B cell (primary cell): ENCODE measurements at regions of chr1 and their contacts with region 1.

Region 1: DNA sequence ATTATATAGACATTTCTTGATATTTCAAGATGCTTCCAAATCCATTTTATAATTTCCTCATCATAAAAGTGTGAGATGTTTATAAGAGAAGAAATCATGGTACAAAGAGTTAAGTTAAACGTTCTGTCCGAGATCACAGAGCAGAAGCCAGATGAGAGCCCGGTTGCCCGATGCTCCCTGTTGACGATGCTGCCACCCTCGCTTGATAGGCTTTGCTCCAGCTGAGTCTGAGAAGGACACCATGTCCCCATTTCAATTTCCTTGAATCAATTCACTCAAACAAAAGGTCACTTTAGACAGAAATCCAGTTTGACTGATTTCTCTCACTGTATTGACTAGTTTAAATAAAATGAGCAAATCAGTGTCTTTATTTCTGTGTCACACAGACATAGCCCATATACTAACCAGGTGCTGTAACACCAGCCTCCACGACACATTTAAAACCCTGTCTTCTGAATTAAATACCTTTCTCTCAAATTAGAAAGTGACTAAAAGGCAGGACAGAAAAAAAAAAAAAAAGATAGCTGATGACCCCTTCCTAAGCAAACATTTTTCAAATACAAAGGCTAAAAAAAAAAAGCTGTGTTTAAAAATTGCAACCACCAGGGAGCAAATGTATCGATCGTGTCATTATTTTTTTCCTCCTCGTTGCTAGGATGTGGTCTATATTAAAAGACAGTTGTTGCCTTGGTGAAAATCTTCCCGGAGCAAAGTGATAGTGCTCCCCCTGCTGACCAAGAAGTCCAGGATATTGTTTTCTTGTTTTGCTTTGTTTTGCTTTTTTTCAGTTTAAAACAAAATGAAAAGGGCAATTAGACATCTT is 35.2 kb downstream of the DNASE2B start:
- DNase-seq: peak; percentile 78
- ATAC-seq: peak; percentile 34
- H3K4me3 ChIP-seq: peak overlapping the region in 4 of 5 experiments; percentile 19 to 43 (median 32)
- H3K4me3 Mint-ChIP-seq: peak overlapping the region; percentile 79
- H3K27ac ChIP-seq: peak overlapping the region in 1 of 2 donors; percentile 55
- H3K27ac Mint-ChIP-seq: peak overlapping the region; percentile 20
- H3K4me1 ChIP-seq: peaks cover 40 to 43% of the 10 kb centered on the region in 2 donors
- H3K4me1 Mint-ChIP-seq: peaks cover 9% of the 10 kb centered on the region
- H3K27me3 ChIP-seq: no peaks in the 10 kb centered on the region
- H3K27me3 Mint-ChIP-seq: no peaks in the 10 kb centered on the region
- CTCF ChIP-seq: peak; percentile 70

Region 2: DNA sequence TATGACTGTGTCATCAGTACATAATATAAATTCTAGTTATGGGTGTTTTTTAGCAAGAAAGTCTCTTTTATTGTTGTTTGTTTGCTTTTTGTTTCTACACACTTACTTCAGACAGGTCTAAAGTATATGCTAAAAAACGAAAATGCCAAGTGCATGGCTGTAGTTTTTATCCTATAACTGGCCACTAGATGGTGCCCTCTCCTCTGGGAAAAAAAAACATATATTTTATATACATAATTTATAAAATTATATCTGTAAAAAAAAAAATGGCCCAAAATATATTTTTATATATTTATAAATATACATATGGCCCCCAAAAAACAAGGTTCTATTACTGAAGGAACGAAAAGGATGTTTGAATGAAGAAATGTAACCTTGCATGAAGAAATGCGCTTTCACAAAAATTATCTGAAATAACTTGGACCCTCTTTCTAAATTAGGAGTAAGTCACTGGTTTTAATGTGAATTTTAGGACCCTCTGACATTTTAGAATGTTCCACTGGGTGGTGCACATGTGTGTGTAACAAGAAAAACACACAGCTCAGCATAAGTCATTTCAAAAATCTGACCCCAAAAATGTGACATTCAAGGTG is 528.1 kb before region 1 on chr1:
- CTCF ChIA-PET with region 1: interaction called, 3 read pairs
- POLR2A ChIA-PET with region 1: no interaction called
- intact Hi-C with region 1: loop called (anchors 10 kb)
- DNase-seq: peak; percentile 34
- ATAC-seq: no peak
- H3K4me3 ChIP-seq: no peak overlapping the region
- H3K4me3 Mint-ChIP-seq: no peak overlapping the region
- H3K27ac ChIP-seq: no peak overlapping the region
- H3K27ac Mint-ChIP-seq: no peak overlapping the region
- H3K4me1 ChIP-seq: no peaks in the 10 kb centered on the region
- H3K4me1 Mint-ChIP-seq: no peaks in the 10 kb centered on the region
- H3K27me3 ChIP-seq: peaks cover 0 to 4% (median 0%) of the 10 kb centered on the region in 4 experiments
- H3K27me3 Mint-ChIP-seq: peaks cover 10% of the 10 kb centered on the region
- CTCF ChIP-seq: peak; percentile 95

Region 3: DNA sequence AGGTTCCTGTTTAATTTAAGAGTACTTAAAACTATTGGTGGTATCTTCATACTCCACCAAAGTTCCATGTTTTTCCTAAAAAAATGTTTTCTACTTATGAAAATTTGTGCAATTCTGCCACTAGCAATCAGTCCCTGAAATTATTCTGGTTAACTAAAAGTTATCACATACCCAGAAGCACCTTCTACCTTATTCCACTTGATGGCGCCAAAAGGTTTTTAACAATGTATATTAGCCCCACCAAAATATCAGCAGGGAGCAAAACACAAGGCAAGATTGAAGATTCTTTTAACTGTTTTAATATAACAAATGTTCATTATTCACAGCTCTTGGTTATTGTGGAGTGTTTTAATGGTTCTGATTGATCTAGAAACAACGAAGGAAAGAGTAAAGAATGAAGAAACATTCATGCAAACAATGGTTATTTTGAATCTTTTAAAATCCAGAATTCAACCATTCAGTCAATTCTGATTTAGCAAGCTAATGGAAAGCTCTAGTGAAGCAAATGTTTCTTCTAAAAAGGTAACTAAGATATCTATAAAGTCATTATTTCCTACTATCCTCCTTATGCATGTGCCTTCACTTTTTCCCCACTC is 501.7 kb before region 1 on chr1:
- CTCF ChIA-PET with region 1: interaction called, 10 read pairs
- POLR2A ChIA-PET with region 1: no interaction called
- intact Hi-C with region 1: loop called (anchors 1 kb)
- DNase-seq: peak; percentile 54
- ATAC-seq: peak; percentile 41
- H3K4me3 ChIP-seq: no peak overlapping the region
- H3K4me3 Mint-ChIP-seq: no peak overlapping the region
- H3K27ac ChIP-seq: no peak overlapping the region
- H3K27ac Mint-ChIP-seq: no peak overlapping the region
- H3K4me1 ChIP-seq: no peaks in the 10 kb centered on the region
- H3K4me1 Mint-ChIP-seq: no peaks in the 10 kb centered on the region
- H3K27me3 ChIP-seq: no peaks in the 10 kb centered on the region
- H3K27me3 Mint-ChIP-seq: no peaks in the 10 kb centered on the region
- CTCF ChIP-seq: peak; percentile 81

Region 4: GRCh38 chr1:84077476-84078107 is 355.9 kb before region 1 on chr1:
- CTCF ChIA-PET with region 1: interaction called, 5 read pairs
- POLR2A ChIA-PET with region 1: no interaction called
- intact Hi-C with region 1: loop called (anchors 5 kb)
- DNase-seq: peak; percentile 85
- ATAC-seq: peak; percentile 93
- H3K4me3 ChIP-seq: peak overlapping the region; percentile 41 to 86 (median 68)
- H3K4me3 Mint-ChIP-seq: peak overlapping the region; percentile 84
- H3K27ac ChIP-seq: peak overlapping the region; percentile 46 to 70
- H3K27ac Mint-ChIP-seq: peak overlapping the region; percentile 67
- H3K4me1 ChIP-seq: peaks cover 7 to 12% of the 10 kb centered on the region in 2 donors
- H3K4me1 Mint-ChIP-seq: peaks cover 13% of the 10 kb centered on the region
- H3K27me3 ChIP-seq: no peaks in the 10 kb centered on the region
- H3K27me3 Mint-ChIP-seq: no peaks in the 10 kb centered on the region
- CTCF ChIP-seq: no peak

Region 5: DNA sequence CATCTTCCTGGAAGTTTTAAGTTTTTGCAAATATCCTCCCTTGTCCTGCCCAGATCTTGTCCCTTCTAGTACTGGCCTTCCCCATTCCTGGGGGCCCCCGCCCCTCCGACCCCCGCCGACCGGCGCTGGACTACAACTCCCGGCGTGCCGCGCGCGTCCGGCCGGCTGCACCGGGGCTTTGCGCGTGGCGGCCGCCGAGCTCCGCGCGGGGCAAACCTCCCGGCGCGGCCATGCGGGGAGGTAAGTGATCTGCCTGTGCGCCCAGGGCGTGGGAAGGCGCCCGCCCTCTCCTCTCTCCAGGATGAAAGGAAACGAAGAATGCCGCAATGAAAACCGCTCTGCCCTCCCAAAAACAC is 135.2 kb before region 1 on chr1:
- CTCF ChIA-PET with region 1: interaction called, 3 read pairs
- POLR2A ChIA-PET with region 1: no interaction called
- intact Hi-C with region 1: loop called (anchors 2 kb)
- DNase-seq: no peak
- ATAC-seq: peak; percentile 87
- H3K4me3 ChIP-seq: peak overlapping the region; percentile 66 to 86 (median 84)
- H3K4me3 Mint-ChIP-seq: peak overlapping the region; percentile 94
- H3K27ac ChIP-seq: no peak overlapping the region
- H3K27ac Mint-ChIP-seq: peak overlapping the region; percentile 69
- H3K4me1 ChIP-seq: peaks cover 31 to 32% of the 10 kb centered on the region in 2 donors
- H3K4me1 Mint-ChIP-seq: peaks cover 36% of the 10 kb centered on the region
- H3K27me3 ChIP-seq: peaks cover 0 to 15% (median 9%) of the 10 kb centered on the region in 4 experiments
- H3K27me3 Mint-ChIP-seq: peaks cover 20% of the 10 kb centered on the region
- CTCF ChIP-seq: no peak

Region 6: GRCh38 chr1:84492726-84493125 is 59.3 kb after region 1 on chr1:
- CTCF ChIA-PET with region 1: no interaction called
- POLR2A ChIA-PET with region 1: no interaction called
- intact Hi-C with region 1: no loop called
- DNase-seq: no peak
- ATAC-seq: no peak
- H3K4me3 ChIP-seq: no peak overlapping the region
- H3K4me3 Mint-ChIP-seq: no peak overlapping the region
- H3K27ac ChIP-seq: no peak overlapping the region
- H3K27ac Mint-ChIP-seq: no peak overlapping the region
- H3K4me1 ChIP-seq: peaks cover 1 to 3% of the 10 kb centered on the region in 2 donors
- H3K4me1 Mint-ChIP-seq: peaks cover 2% of the 10 kb centered on the region
- H3K27me3 ChIP-seq: no peaks in the 10 kb centered on the region
- H3K27me3 Mint-ChIP-seq: no peaks in the 10 kb centered on the region
- CTCF ChIP-seq: no peak

Region 7: GRCh38 chr1:84620720-84621313 is 187.3 kb after region 1 on chr1:
- CTCF ChIA-PET with region 1: interaction called, 13 read pairs
- POLR2A ChIA-PET with region 1: no interaction called
- intact Hi-C with region 1: loop called (anchors 2 kb)
- DNase-seq: peak; percentile 90
- ATAC-seq: peak; percentile 92
- H3K4me3 ChIP-seq: peak overlapping the region in 4 of 5 experiments; percentile 59 to 84 (median 72)
- H3K4me3 Mint-ChIP-seq: peak overlapping the region; percentile 96
- H3K27ac ChIP-seq: no peak overlapping the region
- H3K27ac Mint-ChIP-seq: peak overlapping the region; percentile 69
- H3K4me1 ChIP-seq: peaks cover 0 to 4% of the 10 kb centered on the region in 2 donors
- H3K4me1 Mint-ChIP-seq: peaks cover 6% of the 10 kb centered on the region
- H3K27me3 ChIP-seq: peaks cover 0 to 5% (median 0%) of the 10 kb centered on the region in 4 experiments
- H3K27me3 Mint-ChIP-seq: peaks cover 6% of the 10 kb centered on the region
- CTCF ChIP-seq: peak; percentile 100

Region 8: GRCh38 chr1:84753516-84754385 is 320.3 kb after region 1 on chr1:
- CTCF ChIA-PET with region 1: interaction called, 25 read pairs
- POLR2A ChIA-PET with region 1: no interaction called
- intact Hi-C with region 1: no loop called
- DNase-seq: peak; percentile 76
- ATAC-seq: peak; percentile 81
- H3K4me3 ChIP-seq: no peak overlapping the region
- H3K4me3 Mint-ChIP-seq: no peak overlapping the region
- H3K27ac ChIP-seq: no peak overlapping the region
- H3K27ac Mint-ChIP-seq: no peak overlapping the region
- H3K4me1 ChIP-seq: peaks cover 1 to 3% of the 10 kb centered on the region in 2 donors
- H3K4me1 Mint-ChIP-seq: peaks cover 3% of the 10 kb centered on the region
- H3K27me3 ChIP-seq: peaks cover 0 to 16% (median 5%) of the 10 kb centered on the region in 4 experiments
- H3K27me3 Mint-ChIP-seq: peaks cover 30% of the 10 kb centered on the region
- CTCF ChIP-seq: peak; percentile 95